ENCODE measurements at regions of chr19 and their contacts with region 1.

Region 1: DNA sequence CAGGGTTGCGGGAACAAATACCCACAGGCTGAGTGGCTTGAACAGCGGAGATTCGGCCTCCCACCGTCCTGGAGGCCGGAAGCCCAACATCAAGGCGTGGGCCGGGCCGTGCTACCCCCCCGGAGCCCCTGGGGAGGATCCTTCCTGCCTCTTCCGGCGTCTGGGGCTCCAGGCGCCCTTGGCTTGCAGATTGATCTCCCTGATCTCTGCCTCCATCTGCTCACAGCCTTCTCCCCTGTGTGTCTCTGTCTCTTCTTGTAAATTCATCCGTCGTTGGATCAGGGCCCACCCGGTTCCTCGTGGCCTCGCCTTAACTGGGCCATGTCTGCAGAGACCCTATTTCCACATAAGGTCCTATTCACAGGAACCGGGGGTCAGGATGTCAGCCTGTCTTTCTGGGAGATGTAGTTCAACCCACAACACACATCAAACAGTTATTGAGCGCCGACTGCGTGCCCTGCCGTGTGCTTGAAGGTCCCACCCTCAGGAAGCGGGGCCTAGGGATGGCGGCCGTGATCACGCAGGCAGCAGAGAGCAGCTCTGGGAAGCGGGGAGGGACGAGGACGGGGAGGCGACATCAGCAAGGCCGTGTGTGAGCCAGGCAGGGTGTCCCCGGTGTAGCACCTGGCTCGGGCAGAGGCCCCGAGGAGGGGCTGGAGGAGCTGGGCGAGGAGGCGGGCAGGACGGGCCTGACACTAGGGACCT is 21.3 kb downstream of the HCN2 start:
- DNase-seq: peak in 8 of 9 experiments; percentile 48 to 85 (median 66)
- ATAC-seq: peak; percentile 62
- H3K4me3 ChIP-seq: peak overlapping the region; percentile 60 to 73
- H3K4me3 Mint-ChIP-seq: peak overlapping the region; percentile 85
- H3K27ac ChIP-seq: peak overlapping the region; percentile 55 to 72
- H3K27ac Mint-ChIP-seq: peak overlapping the region; percentile 85
- H3K4me1 ChIP-seq: peaks cover 26% of the 10 kb centered on the region
- H3K4me1 Mint-ChIP-seq: peaks cover 22% of the 10 kb centered on the region
- H3K27me3 ChIP-seq: no peaks in the 10 kb centered on the region
- H3K27me3 Mint-ChIP-seq: peaks cover 2% of the 10 kb centered on the region
- CTCF ChIP-seq: no peak

Region 2: DNA sequence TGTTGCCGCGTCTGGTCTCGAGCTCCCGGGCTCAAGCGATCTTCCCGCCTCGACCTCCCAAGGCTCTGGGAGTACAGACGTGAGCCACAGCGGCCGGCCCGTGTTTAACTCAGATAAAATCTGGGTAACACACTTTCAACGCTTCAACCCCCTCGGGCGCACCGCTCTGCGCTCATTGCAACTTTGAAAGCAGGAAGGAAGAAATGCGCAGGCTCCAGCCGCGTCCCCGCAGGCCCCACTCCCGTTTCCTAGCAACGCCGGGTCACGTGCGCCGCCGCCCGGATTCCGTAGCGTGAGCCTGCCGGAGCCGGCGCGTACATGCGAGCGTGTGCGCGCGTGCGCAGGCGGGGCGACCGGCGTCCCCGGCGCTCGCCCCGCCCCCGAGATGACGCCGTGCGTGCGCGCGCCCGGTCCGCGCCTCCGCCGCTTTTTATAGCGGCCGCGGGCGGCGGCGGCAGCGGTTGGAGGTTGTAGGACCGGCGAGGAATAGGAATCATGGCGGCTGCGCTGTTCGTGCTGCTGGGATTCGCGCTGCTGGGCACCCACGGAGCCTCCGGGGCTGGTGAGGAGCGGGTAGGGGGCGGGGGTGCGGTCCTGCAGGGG is 38.7 kb before region 1 on chr19 and contains the start of gene BSG:
- CTCF ChIA-PET with region 1: no interaction called
- POLR2A ChIA-PET with region 1: no interaction called
- intact Hi-C with region 1: no loop called
- DNase-seq: peak; percentile 96 to 100 (median 99)
- ATAC-seq: peak; percentile 79
- H3K4me3 ChIP-seq: peak within 1 kb of the TSS; percentile 85 to 98
- H3K4me3 Mint-ChIP-seq: peak within 1 kb of the TSS; percentile 89
- H3K27ac ChIP-seq: peak within 1 kb of the TSS; percentile 86 to 90
- H3K27ac Mint-ChIP-seq: peak within 1 kb of the TSS; percentile 96
- H3K4me1 ChIP-seq: peaks cover 26% of the 10 kb centered on the region
- H3K4me1 Mint-ChIP-seq: peaks cover 38% of the 10 kb centered on the region
- H3K27me3 ChIP-seq: no peaks in the 10 kb centered on the region
- H3K27me3 Mint-ChIP-seq: no peaks in the 10 kb centered on the region
- CTCF ChIP-seq: no peak
- total RNA-seq, gene BSG: 76.2 to 81.2 TPM

Region 3: GRCh38 chr19:633068-633785 is 22.3 kb after region 1 on chr19 and contains the start of gene POLRMT:
- CTCF ChIA-PET with region 1: no interaction called
- POLR2A ChIA-PET with region 1: interaction called, 3 read pairs
- intact Hi-C with region 1: loop called (anchors 1 to 2 kb)
- DNase-seq: peak; percentile 88 to 99 (median 95)
- ATAC-seq: peak; percentile 95
- H3K4me3 ChIP-seq: peak within 1 kb of the TSS; percentile 89 to 93
- H3K4me3 Mint-ChIP-seq: peak within 1 kb of the TSS; percentile 95
- H3K27ac ChIP-seq: peak within 1 kb of the TSS; percentile 61 to 72
- H3K27ac Mint-ChIP-seq: peak within 1 kb of the TSS; percentile 94
- H3K4me1 ChIP-seq: peaks cover 22% of the 10 kb centered on the region
- H3K4me1 Mint-ChIP-seq: peaks cover 30% of the 10 kb centered on the region
- H3K27me3 ChIP-seq: no peaks in the 10 kb centered on the region
- H3K27me3 Mint-ChIP-seq: no peaks in the 10 kb centered on the region
- CTCF ChIP-seq: no peak
- total RNA-seq, gene POLRMT: 48.6 to 53.7 TPM